A673 (cell line): ENCODE measurements at regions of chr3 and their contacts with region 1.

Region 1: GRCh38 chr3:167929968-167930367 is 165.8 kb downstream of the GOLIM4 start:
- DNase-seq: no peak
- H3K4me3 ChIP-seq: no peak overlapping the region
- H3K27ac ChIP-seq: no peak overlapping the region
- H3K4me1 ChIP-seq: no peaks in the 10 kb centered on the region
- H3K27me3 ChIP-seq: peaks cover 9% of the 10 kb centered on the region
- CTCF ChIP-seq: no peak

Region 2: DNA sequence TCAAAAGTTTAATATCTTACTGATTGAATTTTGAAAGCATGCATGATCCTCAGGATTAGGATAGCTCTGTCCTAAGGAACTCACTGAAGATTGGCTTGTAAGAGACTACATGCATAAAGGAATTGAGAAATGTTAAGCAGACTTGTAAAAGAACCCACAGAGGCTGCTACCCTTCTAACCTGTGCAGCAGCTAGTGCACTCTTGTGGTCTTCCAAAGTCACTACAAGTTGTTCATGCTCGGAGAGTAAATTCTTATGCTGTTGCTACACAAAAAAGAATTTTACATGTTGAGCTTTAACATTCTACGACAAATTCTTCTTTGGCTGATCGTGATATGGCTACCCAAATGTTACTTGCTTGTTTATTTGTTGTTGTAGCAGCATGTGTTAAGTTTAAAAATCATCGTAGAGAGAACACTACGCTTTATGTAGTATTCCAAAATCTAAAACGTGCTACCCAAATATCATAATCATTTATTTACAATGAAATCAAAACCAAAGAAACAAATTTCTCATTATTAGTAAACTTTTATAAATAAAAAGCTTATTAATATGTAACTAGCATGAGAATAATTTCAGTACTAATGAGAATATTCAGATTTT is 110.7 kb after region 1 on chr3:
- CTCF ChIA-PET with region 1: no interaction called
- POLR2A ChIA-PET with region 1: no interaction called
- intact Hi-C with region 1: loop called (anchors 1 kb)
- DNase-seq: peak; percentile 74
- H3K4me3 ChIP-seq: no peak overlapping the region
- H3K27ac ChIP-seq: no peak overlapping the region
- H3K4me1 ChIP-seq: no peaks in the 10 kb centered on the region
- H3K27me3 ChIP-seq: no peaks in the 10 kb centered on the region
- CTCF ChIP-seq: peak; percentile 78

Region 3: DNA sequence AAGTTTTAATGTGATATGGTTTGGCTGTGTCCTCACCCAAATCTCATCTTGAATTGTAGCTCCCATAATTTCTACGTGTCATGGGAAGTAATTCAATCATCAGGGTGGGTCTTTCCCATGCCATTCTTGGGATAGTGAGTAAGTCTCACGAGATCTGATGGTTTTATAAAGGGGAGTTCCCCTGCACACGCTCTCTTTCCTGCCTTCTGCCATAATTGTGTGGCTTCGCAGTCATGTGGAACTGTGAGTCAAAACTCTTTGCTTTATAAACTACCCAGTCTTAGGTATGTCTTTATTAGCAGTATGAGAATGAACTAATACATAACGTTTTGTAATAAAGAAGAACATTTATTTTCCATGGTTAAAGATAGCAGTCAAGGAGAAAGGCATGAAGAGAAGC is 205.0 kb after region 1 on chr3:
- CTCF ChIA-PET with region 1: no interaction called
- POLR2A ChIA-PET with region 1: no interaction called
- intact Hi-C with region 1: no loop called
- DNase-seq: no peak
- H3K4me3 ChIP-seq: no peak overlapping the region
- H3K27ac ChIP-seq: no peak overlapping the region
- H3K4me1 ChIP-seq: no peaks in the 10 kb centered on the region
- H3K27me3 ChIP-seq: peaks cover 13% of the 10 kb centered on the region
- CTCF ChIP-seq: no peak

Region 4: DNA sequence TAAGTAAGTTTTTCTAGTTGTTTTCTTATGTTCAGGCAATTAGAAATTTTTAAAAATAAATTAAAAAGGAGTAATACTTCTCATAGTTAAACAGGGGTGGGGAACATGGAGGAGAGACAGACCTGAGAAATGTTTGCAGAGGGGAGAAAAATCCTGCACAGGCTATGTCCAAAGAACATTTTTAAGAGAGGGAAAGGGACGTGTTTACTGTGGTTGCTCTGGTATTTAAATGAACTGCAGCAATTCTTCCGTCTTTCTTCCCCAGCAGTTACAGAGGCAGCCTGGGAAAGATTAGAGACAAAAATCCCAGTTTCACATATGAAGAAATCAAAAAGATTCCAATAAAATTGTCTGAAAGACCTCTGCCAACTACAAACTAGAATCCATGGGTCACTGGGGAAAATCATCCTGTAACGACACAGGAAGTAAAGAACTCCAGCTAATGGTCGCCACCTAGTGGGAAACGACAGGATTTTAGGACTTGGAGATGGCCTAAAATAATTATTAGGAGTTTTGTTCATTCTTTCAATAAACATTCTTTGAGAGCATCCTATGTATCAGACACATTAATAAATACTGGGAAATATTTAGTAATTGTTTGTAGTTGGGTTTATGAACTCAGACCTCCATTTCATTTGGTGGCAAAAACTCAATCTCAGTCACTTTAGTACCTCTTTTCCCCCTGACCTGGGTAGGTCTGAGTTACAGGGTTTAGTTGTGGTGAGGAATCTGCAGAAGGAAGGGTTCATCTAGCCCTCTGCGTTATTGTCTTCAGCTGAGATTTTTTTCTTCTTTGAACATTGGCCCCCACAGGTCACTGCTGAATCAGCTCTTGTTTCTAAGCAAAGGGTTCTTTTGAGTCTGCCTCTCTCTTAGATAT is 235.7 kb after region 1 on chr3:
- CTCF ChIA-PET with region 1: no interaction called
- POLR2A ChIA-PET with region 1: no interaction called
- intact Hi-C with region 1: loop called (anchors 2 kb)
- DNase-seq: peak; percentile 72
- H3K4me3 ChIP-seq: no peak overlapping the region
- H3K27ac ChIP-seq: no peak overlapping the region
- H3K4me1 ChIP-seq: no peaks in the 10 kb centered on the region
- H3K27me3 ChIP-seq: no peaks in the 10 kb centered on the region
- CTCF ChIP-seq: peak; percentile 76

Region 5: DNA sequence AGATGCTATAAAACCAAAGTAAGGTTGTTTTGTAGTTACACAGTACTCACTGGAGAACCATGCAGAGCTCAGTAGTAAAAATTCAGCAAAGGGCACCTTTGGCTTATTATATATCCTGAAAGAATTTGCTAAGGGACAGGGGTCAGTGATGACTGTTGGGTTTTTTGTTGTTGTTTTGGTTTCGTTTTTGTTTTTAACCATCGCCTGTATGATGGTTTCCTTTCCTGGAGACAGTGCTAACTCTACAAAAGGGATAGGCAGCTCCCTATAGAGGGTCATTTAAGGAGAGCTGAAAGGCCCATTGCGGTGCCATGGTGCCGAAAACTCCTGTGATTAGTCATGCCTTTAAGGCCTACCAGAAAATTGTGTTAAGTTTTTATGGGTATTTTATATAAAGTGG is 284.0 kb after region 1 on chr3:
- CTCF ChIA-PET with region 1: no interaction called
- POLR2A ChIA-PET with region 1: no interaction called
- intact Hi-C with region 1: no loop called
- DNase-seq: no peak
- H3K4me3 ChIP-seq: no peak overlapping the region
- H3K27ac ChIP-seq: no peak overlapping the region
- H3K4me1 ChIP-seq: no peaks in the 10 kb centered on the region
- H3K27me3 ChIP-seq: peaks cover 20% of the 10 kb centered on the region
- CTCF ChIP-seq: no peak